ENCODE measurements at regions of chr3 and their contacts with region 1.

Region 1: GRCh38 chr3:115658337-115659181 is 35.2 kb downstream of the GAP43 start:
- DNase-seq: peak; percentile 84
- H3K4me3 Mint-ChIP-seq: peak overlapping the region; percentile 90
- H3K27ac Mint-ChIP-seq: peak overlapping the region; percentile 96
- H3K4me1 Mint-ChIP-seq: peaks cover 45% of the 10 kb centered on the region
- H3K27me3 Mint-ChIP-seq: peaks cover 3% of the 10 kb centered on the region

Region 2: GRCh38 chr3:114504941-114505632 is 1153.5 kb before region 1 on chr3:
- CTCF ChIA-PET with region 1: no interaction called
- intact Hi-C with region 1: loop called (anchors 5 kb)
- DNase-seq: peak; percentile 12
- H3K4me3 Mint-ChIP-seq: no peak overlapping the region
- H3K27ac Mint-ChIP-seq: no peak overlapping the region
- H3K4me1 Mint-ChIP-seq: peaks cover 44% of the 10 kb centered on the region
- H3K27me3 Mint-ChIP-seq: peaks cover 17% of the 10 kb centered on the region

Region 3: DNA sequence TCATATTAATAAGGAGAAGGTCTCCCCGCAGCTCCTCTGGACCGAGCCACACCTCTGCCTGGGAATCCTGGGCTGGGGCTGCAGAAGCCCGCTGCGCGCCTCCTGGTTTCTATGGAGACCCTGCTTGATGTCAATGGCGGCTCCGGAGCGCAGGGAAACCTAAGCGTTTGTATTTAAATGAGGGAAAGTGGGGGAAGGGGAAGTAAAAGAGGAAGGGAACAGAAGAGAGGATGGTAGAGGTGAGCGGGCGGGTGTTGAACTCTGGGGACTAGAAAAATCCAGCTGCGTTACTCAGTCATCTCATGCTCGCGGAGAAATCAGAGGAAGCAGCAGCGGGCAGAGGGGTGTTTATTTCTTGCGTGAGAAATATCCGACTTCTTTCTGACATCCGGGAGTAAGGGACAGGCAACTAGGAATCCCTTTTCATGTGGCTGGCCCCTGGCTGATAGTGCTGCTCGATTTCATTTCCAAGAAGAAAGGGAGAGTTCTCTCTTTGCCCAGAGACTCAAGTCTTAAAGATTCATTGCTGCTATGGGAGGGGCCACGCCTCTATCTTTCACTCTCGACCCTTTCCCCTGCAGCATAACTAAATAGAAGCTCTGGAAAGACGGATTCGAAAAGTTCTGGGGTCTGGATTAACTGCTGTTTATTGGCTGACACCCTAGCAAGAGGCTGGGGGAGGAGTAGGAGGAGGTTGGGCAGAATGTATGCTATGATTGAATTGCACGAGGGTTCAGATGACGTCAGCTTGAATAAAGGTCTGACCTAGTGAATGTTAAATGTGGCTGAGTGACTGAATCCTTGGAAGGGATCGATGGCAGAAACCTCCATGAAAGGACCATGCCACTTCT is 145.8 kb before region 1 on chr3:
- CTCF ChIA-PET with region 1: no interaction called
- intact Hi-C with region 1: loop called (anchors 1 kb)
- DNase-seq: peak; percentile 50
- H3K4me3 Mint-ChIP-seq: peak overlapping the region; percentile 83
- H3K27ac Mint-ChIP-seq: no peak overlapping the region
- H3K4me1 Mint-ChIP-seq: peaks cover 20% of the 10 kb centered on the region
- H3K27me3 Mint-ChIP-seq: peaks cover 33% of the 10 kb centered on the region

Region 4: GRCh38 chr3:115616461-115616860 is 42.1 kb before region 1 on chr3:
- CTCF ChIA-PET with region 1: no interaction called
- intact Hi-C with region 1: loop called (anchors 1 kb)
- DNase-seq: peak; percentile 60
- H3K4me3 Mint-ChIP-seq: no peak overlapping the region
- H3K27ac Mint-ChIP-seq: no peak overlapping the region
- H3K4me1 Mint-ChIP-seq: peaks cover 11% of the 10 kb centered on the region
- H3K27me3 Mint-ChIP-seq: peaks cover 22% of the 10 kb centered on the region

Measured in activated naive CD4-positive, alpha-beta T cell treated with anti-CD3 and anti-CD28 coated beads for 36 hours (primary cell).